ENCODE measurements at regions of chr5 and their contacts with region 1.

Region 1: GRCh38 chr5:61279725-61280124 is 52.3 kb upstream of the ZSWIM6 start:
- DNase-seq: no peak
- ATAC-seq: no peak
- H3K4me3 ChIP-seq: no peak overlapping the region
- H3K27ac ChIP-seq: no peak overlapping the region
- H3K4me1 ChIP-seq: peaks cover 28% of the 10 kb centered on the region
- H3K27me3 ChIP-seq: no peaks in the 10 kb centered on the region
- CTCF ChIP-seq: no peak

Region 2: GRCh38 chr5:61262080-61262479 is 17.6 kb before region 1 on chr5:
- CTCF ChIA-PET with region 1: no interaction called
- POLR2A ChIA-PET with region 1: no interaction called
- intact Hi-C with region 1: loop called (anchors 1 kb)
- DNase-seq: no peak
- ATAC-seq: no peak
- H3K4me3 ChIP-seq: no peak overlapping the region
- H3K27ac ChIP-seq: no peak overlapping the region
- H3K4me1 ChIP-seq: no peaks in the 10 kb centered on the region
- H3K27me3 ChIP-seq: no peaks in the 10 kb centered on the region
- CTCF ChIP-seq: no peak

Region 3: DNA sequence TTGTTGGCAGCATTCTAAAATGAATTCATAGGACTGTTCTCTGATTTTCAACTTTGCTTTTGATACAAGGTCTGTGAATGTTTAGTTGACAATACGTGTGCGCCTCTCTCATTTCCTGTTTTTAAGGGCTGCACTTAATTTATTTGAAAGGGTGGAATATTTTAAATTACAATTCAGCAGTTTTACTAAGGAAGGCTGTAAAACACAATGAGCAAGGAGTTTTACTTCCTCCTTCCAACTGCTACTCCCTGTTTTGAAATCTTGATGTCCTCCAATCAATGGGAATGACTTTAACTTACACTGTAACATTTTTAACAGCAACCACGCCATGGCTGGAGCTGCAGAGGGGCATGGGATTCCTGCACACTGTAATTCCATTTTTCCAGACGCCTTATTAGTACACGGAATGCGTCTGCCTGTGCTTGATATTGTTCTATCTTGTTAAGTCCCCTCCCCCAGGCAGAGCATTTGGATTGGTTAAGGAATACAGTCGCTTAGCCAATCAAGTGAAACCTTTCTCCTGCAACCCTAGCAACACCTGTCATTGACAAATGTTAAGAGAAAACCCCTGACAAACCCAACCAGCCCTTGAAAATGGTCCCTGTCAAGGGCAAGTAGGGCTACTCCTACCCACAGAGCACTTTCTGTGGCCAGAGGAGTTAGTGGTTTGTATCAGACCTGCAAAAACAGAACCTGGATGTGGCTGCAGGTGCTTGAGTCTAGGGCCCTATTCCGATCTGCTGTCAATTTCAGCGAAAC is 39.8 kb after region 1 on chr5:
- CTCF ChIA-PET with region 1: no interaction called
- POLR2A ChIA-PET with region 1: no interaction called
- intact Hi-C with region 1: no loop called
- DNase-seq: no peak
- ATAC-seq: no peak
- H3K4me3 ChIP-seq: no peak overlapping the region
- H3K27ac ChIP-seq: no peak overlapping the region
- H3K4me1 ChIP-seq: peaks cover 41% of the 10 kb centered on the region
- H3K27me3 ChIP-seq: no peaks in the 10 kb centered on the region
- CTCF ChIP-seq: no peak